HepG2 (cell line): ENCODE measurements at regions of chr11 and their contacts with region 1.

Region 1: GRCh38 chr11:129447654-129448239 is 72.1 kb downstream of the BARX2 start:
- DNase-seq: no peak
- ATAC-seq: no peak
- H3K4me3 ChIP-seq: no peak overlapping the region
- H3K27ac ChIP-seq: no peak overlapping the region
- H3K4me1 ChIP-seq: no peaks in the 10 kb centered on the region
- H3K27me3 ChIP-seq: 0 out of 5 replicates have a peak, but pooled peaks cover 0 to 3% of the 10 kb centered on the region in 2 experiments
- CTCF ChIP-seq: no peak
- EP300 ChIP-seq: no peak
- POLR2A ChIP-seq: no peak
- RAD21 ChIP-seq: no peak

Region 2: DNA sequence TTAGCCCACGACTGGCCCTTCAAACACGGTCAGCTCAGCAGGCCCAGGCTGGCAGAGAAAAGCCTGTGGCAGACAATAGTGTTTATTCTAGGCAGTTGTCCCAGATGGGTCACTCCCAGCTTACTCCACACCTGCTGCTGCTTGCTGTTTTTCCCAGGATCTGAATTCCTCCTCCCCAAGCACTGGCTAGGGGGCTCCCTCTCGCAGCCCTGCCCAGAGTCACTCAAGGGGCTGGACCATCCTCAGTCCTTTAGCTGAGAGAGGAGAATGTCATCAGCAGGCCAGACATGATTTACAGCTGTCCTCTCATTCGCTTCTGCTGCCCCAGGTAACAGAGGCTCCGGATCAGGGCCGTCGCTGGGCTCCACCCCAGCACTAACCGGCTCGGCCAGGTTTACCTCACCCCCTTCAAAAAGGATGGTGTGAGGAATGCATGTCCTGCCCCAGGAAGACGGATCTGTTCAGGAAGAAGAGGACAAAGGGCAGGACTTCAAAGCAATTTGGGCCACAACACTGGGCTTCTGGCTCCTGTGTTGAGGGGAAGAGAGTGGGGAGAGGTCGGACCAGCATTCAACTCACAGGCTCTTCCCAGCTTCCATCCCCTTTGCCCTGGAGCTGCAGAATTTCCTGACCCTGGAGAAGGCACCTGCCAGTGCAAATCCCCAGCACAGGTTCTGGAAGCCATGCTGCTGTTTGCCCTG is 131.8 kb before region 1 on chr11:
- CTCF ChIA-PET with region 1: no interaction called
- POLR2A ChIA-PET with region 1: no interaction called
- in situ Hi-C with region 1: no loop called
- intact Hi-C with region 1: no loop called
- DNase-seq: peak; percentile 45
- ATAC-seq: peak; percentile 78
- H3K4me3 ChIP-seq: peak overlapping the region; percentile 18 to 53 (median 18); a peak in 4 of 6 replicates
- H3K27ac ChIP-seq: no peak overlapping the region
- H3K4me1 ChIP-seq: peaks cover 60% of the 10 kb centered on the region
- H3K27me3 ChIP-seq: no peaks in the 10 kb centered on the region
- CTCF ChIP-seq: peak; percentile 41
- EP300 ChIP-seq: no peak
- POLR2A ChIP-seq: no peak
- RAD21 ChIP-seq: no peak

Region 3: DNA sequence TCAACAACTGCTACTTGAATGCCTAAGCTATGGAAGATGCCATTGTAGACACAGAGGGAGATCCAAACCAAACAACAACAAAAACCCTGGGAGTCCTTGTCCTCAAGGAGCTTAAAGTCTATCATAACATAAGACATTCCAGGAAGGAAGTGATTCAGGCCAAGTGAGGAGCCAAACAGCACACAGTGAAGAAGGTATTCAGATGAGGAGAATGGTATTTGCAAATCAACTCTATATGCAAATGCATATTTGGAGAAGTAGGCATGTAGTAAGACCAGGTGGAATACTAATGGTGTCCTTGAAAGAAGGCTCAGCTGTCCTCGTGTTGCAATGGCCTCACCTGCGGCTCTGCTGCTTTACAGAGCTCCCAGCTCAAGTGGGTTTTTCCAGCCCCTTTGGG is 45.0 kb before region 1 on chr11:
- CTCF ChIA-PET with region 1: no interaction called
- POLR2A ChIA-PET with region 1: no interaction called
- in situ Hi-C with region 1: no loop called
- intact Hi-C with region 1: loop called (anchors 1 kb)
- DNase-seq: no peak
- ATAC-seq: no peak
- H3K4me3 ChIP-seq: no peak overlapping the region
- H3K27ac ChIP-seq: no peak overlapping the region
- H3K4me1 ChIP-seq: no peaks in the 10 kb centered on the region
- H3K27me3 ChIP-seq: peaks cover 0 to 21% of the 10 kb centered on the region in 2 experiments; a peak in 3 of 5 replicates
- CTCF ChIP-seq: no peak
- EP300 ChIP-seq: no peak
- POLR2A ChIP-seq: no peak
- RAD21 ChIP-seq: no peak

Region 4: DNA sequence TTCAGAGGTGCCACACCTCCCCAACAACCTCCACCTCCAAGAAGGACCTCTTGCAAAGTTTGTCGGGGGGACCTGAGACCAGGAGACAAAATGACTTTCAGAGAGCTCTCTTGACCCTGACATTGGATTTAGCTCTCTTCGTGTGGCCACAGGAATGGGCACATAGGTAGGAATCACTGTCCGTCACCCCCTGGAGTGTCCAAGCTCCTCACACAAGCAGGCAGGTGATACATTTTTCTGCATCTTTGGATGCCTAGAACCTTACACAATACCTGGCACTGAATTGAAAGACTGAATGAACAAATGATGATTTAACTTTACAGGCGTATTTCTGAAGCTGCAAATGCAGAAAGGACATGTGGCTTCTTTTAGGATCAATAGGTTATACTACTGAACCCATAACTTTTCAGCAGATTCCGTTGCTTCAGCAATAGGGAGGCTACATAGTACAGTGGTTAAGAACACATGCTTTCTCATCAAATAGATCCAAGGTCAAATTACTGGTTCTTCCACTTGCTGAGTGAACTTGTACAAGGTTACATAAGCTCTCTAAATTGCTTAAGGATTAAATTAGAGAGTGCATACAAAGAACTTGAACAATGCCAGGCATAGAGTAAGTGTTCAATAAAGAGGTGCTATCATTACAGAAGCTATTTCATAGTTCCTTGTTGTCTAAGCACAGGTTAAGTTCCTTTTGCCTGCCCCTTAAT is 57.4 kb after region 1 on chr11:
- CTCF ChIA-PET with region 1: no interaction called
- POLR2A ChIA-PET with region 1: no interaction called
- in situ Hi-C with region 1: no loop called
- intact Hi-C with region 1: no loop called
- DNase-seq: no peak
- ATAC-seq: no peak
- H3K4me3 ChIP-seq: no peak overlapping the region
- H3K27ac ChIP-seq: no peak overlapping the region
- H3K4me1 ChIP-seq: no peaks in the 10 kb centered on the region
- H3K27me3 ChIP-seq: no peaks in the 10 kb centered on the region
- CTCF ChIP-seq: no peak
- EP300 ChIP-seq: no peak
- POLR2A ChIP-seq: no peak
- RAD21 ChIP-seq: no peak